ENCODE measurements at regions of chr18 and their contacts with region 1.

Region 1: GRCh38 chr18:2083691-2084090 is 487.6 kb downstream of the METTL4 start:
- DNase-seq: no peak
- H3K4me3 ChIP-seq: no peak overlapping the region
- H3K27ac ChIP-seq: no peak overlapping the region
- H3K4me1 ChIP-seq: no peaks in the 10 kb centered on the region
- H3K27me3 ChIP-seq: no peaks in the 10 kb centered on the region

Region 2: DNA sequence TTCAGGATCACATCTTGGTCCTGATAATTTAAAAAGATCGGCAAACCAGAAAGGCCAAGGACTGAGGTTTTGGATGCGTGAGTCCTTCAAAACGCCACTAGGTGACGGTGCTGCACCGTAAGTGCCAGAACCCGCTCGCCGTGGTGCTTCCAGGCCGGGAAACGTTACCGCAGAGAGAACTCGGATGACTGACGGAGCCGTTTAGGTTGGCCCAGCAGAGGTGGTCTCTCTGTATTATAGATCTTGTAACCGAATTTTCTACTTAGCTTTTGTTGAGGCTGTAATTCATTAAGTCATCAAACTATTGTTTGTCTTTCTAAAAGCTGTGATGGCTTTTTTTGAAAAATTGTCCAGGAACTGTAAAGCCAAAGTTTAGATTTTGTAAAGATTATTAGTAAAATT is 1218.8 kb before region 1 on chr18:
- in situ Hi-C with region 1: loop called (anchors 25 kb)
- DNase-seq: peak; percentile 87
- H3K4me3 ChIP-seq: no peak overlapping the region
- H3K27ac ChIP-seq: no peak overlapping the region
- H3K4me1 ChIP-seq: no peaks in the 10 kb centered on the region
- H3K27me3 ChIP-seq: peaks cover 33% of the 10 kb centered on the region

Region 3: GRCh38 chr18:1917141-1917935 is 166.4 kb before region 1 on chr18:
- in situ Hi-C with region 1: no loop called
- DNase-seq: no peak
- H3K4me3 ChIP-seq: no peak overlapping the region
- H3K27ac ChIP-seq: no peak overlapping the region
- H3K4me1 ChIP-seq: no peaks in the 10 kb centered on the region
- H3K27me3 ChIP-seq: no peaks in the 10 kb centered on the region

Measured in GM23248 (cell line).